Heart left ventricle (tissue), 16 donors: ENCODE measurements at regions of chr10 and their contacts with region 1.

Region 1: GRCh38 chr10:29443745-29444523 is 155.1 kb downstream of the LYZL1 start:
- DNase-seq: no peak
- ATAC-seq: no peak
- H3K4me3 ChIP-seq: no peak overlapping the region
- H3K27ac ChIP-seq: no peak overlapping the region
- H3K4me1 ChIP-seq: peaks cover 0 to 19% (median 10%) of the 10 kb centered on the region in 12 donors
- H3K27me3 ChIP-seq: no peaks in the 10 kb centered on the region
- CTCF ChIP-seq: no peak
- POLR2A ChIP-seq: no peak

Region 2: DNA sequence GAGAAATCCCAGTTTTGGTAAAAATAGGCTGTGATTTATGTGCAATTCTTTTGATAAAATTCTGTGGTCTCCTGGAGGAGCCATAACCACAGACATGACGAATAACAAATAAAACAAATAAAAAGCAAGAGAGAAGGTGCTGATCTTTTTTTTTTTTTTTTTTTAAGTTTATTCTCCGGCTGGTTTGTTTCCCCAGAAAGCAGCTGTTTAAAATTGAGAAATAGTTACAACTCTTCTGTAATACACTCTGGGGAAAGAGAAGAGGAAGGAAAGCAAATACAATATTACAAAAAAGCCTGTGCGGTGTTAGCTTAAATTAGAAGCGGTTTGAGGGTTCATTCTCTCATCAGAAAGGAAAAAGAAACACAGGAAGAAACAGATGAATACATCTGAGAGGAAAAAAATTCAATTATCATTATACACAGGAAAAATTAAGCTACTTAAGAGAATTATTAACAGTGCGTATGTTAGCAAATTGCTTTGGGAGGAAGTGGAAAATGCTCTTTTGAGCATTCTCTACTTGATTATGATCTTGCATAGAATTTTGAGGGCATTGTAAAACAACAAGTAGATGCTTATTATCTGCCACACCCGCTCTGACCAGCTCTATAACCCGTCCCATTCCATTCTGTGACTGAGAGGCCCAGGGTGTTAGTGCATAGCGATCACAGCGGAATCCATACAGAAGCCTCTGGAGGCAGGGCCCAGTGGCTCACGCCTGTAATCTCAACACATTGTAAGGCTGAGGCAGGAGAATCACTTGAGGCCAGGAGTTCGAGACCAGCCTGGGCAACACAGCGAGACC is 951.6 kb before region 1 on chr10:
- intact Hi-C with region 1: no loop called
- DNase-seq: no peak
- ATAC-seq: peak in 2 of 4 donors; percentile 34 to 39
- H3K4me3 ChIP-seq: peak overlapping the region in 1 of 12 donors; percentile 36
- H3K27ac ChIP-seq: peak overlapping the region in 3 of 12 donors; percentile 10 to 77 (median 18)
- H3K4me1 ChIP-seq: peaks cover 0 to 44% (median 3%) of the 10 kb centered on the region in 12 donors
- H3K27me3 ChIP-seq: no peaks in the 10 kb centered on the region
- CTCF ChIP-seq: no peak
- POLR2A ChIP-seq: no peak

Region 3: GRCh38 chr10:29377333-29377961 is 66.5 kb before region 1 on chr10:
- intact Hi-C with region 1: loop called in 2 of 10 experiments (anchors 2 to 10 kb)
- DNase-seq: no peak
- ATAC-seq: peak in 1 of 4 donors; percentile 26
- H3K4me3 ChIP-seq: no peak overlapping the region
- H3K27ac ChIP-seq: no peak overlapping the region
- H3K4me1 ChIP-seq: no peaks in the 10 kb centered on the region
- H3K27me3 ChIP-seq: no peaks in the 10 kb centered on the region
- CTCF ChIP-seq: peak; percentile 59 to 79 (median 70)
- POLR2A ChIP-seq: no peak

Region 4: DNA sequence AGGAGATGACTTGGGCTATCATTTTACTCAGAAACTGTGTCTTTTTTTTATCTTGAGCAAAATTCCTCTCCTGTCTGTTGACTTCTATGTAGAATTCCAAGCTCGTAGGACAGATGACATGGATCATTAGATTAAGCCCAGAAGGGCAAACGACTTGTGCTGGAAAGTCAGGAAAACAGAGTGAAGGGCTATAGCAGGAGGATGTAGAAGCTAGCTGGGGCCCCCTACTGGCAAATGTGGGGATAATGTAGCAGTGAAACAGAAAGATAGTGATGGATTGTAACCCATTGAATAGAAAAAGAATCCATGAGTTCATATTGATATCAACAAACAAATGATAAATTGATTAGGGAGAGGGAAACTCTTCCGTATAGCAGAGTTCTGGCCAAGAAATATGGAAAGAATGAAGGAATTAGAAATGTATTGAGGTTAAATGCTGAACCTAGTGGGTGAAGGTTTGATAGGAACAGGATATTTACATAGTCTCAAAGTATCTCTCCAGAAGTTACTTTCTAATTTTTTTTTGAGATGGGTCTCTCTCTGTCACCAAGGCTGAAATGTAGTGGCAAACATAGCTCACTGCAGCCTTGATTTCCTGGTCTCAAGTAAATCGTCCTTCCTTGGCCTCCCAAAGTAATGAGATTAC is 51.4 kb before region 1 on chr10:
- intact Hi-C with region 1: loop called in 7 of 10 experiments (anchors 2 to 10 kb)
- DNase-seq: no peak
- ATAC-seq: peak in 2 of 4 donors; percentile 44 to 71
- H3K4me3 ChIP-seq: no peak overlapping the region
- H3K27ac ChIP-seq: no peak overlapping the region
- H3K4me1 ChIP-seq: no peaks in the 10 kb centered on the region
- H3K27me3 ChIP-seq: no peaks in the 10 kb centered on the region
- CTCF ChIP-seq: peak; percentile 59 to 85 (median 75)
- POLR2A ChIP-seq: no peak

Region 5: DNA sequence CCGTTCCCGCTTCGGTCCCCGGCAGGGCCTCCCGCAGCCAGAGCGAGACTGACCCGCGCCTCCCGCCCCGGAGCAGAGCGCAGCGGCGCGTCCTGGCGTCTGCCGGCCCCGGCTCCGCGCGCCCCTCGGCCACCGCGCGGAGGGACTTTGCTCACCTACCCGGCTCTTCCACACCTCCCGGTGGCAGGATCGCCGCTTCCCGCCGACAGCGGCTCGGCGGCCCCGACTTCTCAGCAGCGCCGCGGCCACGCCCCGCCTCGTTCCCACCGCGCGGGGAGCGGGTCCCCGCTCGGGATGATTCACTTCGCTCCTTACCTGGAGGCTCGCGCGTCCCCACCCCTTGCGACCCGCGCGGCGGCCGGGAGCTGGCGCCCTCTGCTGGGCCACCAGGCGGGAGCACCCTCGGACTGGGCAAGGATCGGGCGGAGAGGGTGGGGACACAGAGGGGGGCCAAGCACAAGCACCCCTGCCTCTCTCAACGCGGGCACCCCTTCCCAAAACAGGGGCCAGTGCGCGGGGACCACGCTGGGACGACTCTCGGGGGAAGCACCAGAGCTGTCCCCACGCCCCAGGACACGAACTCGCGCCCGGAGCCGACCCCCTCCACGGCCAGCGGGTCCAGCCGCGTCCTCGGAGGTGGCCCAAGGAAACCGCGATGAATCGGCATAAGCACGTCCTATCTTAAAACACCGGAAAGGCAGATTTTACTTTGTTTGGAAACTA is 291.8 kb after region 1 on chr10:
- intact Hi-C with region 1: no loop called
- DNase-seq: peak; percentile 84 to 93 (median 88)
- ATAC-seq: peak; percentile 73 to 91 (median 90)
- H3K4me3 ChIP-seq: peak overlapping the region; percentile 42 to 94 (median 85)
- H3K27ac ChIP-seq: peak overlapping the region; percentile 85 to 98 (median 93)
- H3K4me1 ChIP-seq: peaks cover 0 to 31% (median 17%) of the 10 kb centered on the region in 12 donors
- H3K27me3 ChIP-seq: no peaks in the 10 kb centered on the region
- CTCF ChIP-seq: peak; percentile 87 to 97 (median 94)
- POLR2A ChIP-seq: peak in 1 of 2 donors; percentile 33

Region 6: GRCh38 chr10:29804025-29804852 is 360.3 kb after region 1 on chr10:
- intact Hi-C with region 1: no loop called
- DNase-seq: peak in 2 of 5 donors; percentile 51 to 57
- ATAC-seq: peak in 3 of 4 donors; percentile 67 to 75 (median 72)
- H3K4me3 ChIP-seq: no peak overlapping the region
- H3K27ac ChIP-seq: peak overlapping the region in 6 of 12 donors; percentile 22 to 76 (median 58)
- H3K4me1 ChIP-seq: peaks cover 0 to 27% (median 10%) of the 10 kb centered on the region in 12 donors
- H3K27me3 ChIP-seq: no peaks in the 10 kb centered on the region
- CTCF ChIP-seq: no peak
- POLR2A ChIP-seq: no peak